Activated CD4-positive, alpha-beta T cell treated with anti-CD3 and anti-CD28 coated beads for 36 hours (primary cell): ENCODE measurements at regions of chr2 and their contacts with region 1.

Region 1: DNA sequence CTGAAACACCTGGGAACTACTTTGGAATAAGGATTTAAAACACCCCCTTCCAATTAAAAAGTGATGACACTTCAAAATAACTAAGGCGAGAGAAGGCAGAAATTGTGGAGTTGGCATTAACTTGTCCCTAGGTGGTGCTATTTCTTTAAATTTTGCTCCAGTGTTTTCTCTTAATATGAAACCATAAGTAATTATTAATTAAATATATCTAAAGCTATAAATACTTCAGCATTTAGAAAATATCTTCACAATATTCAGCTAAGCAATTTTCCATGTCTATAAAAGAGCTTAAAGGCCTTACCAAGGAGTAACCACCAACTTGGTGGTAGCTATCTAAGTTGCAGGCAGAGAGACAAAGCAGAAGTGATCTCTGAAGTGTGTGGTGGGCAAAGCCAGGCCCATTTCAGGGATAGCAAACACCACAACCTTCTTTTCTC is 186.8 kb upstream of the PGAP1 start:
- DNase-seq: no peak
- ATAC-seq: peak; percentile 41
- H3K4me3 Mint-ChIP-seq: no peak overlapping the region
- H3K27ac Mint-ChIP-seq: peak overlapping the region; percentile 26
- H3K4me1 Mint-ChIP-seq: peaks cover 25% of the 10 kb centered on the region
- H3K27me3 Mint-ChIP-seq: no peaks in the 10 kb centered on the region

Region 2: DNA sequence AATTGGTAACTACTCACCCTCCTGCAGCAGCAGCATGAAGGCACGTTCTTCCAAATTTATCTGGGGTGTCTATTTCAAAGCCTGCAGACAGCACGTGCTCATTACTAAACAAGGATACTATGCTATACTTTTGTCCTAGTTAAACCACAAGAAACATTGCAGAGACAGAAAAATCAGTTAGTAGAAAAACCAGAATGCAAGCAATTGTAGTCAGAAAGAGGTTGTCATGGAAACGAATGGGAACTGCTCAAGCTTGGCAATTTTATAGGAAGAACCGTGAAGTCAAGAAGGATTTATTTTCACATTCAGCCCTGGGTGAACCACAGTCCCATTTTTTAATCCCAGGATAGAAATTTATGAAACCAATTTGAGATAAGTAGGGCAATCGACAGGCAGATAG is 24.6 kb before region 1 on chr2:
- CTCF ChIA-PET with region 1: interaction called, 31 read pairs
- POLR2A ChIA-PET with region 1: no interaction called
- intact Hi-C with region 1: no loop called
- DNase-seq: no peak
- ATAC-seq: no peak
- H3K4me3 Mint-ChIP-seq: no peak overlapping the region
- H3K27ac Mint-ChIP-seq: peak overlapping the region; percentile 20
- H3K4me1 Mint-ChIP-seq: peaks cover 8% of the 10 kb centered on the region
- H3K27me3 Mint-ChIP-seq: no peaks in the 10 kb centered on the region

Region 3: DNA sequence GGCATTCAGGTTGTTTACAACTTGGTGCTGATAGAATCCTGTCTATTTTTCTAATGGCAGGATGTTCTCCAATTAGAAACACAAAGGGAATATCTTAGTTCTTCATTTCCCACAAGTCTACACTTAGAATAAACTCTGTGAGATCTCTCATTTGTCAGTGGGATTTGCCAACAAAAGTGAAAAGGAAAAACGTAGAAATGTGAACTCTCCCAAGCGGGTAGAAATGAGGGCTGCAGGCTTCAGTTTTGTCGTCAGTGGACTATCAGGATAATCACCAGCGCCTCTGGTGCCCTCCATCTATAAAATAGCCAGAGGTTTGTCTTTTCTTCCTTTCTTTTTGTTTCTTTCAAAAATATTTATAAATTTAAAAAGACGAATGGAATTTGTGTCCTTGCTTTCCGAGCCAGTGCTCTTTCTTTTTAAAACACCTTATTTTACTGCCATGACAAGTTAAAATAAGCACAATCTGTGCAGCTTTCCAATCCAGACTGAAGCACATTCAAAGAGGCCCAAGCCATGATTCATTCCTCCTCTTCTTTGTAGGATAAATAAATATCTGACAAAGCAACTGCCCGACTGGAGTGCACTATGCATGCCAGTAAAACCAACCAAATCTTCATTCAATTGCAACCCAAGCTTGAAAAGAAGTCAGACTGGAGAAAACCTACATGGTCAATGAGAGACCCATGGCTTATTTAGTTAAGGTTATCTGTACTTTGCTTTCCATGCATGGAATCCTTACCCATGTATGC is 11.5 kb after region 1 on chr2:
- CTCF ChIA-PET with region 1: interaction called, 31 read pairs
- POLR2A ChIA-PET with region 1: interaction called, 6 read pairs
- intact Hi-C with region 1: no loop called
- DNase-seq: no peak
- ATAC-seq: no peak
- H3K4me3 Mint-ChIP-seq: no peak overlapping the region
- H3K27ac Mint-ChIP-seq: no peak overlapping the region
- H3K4me1 Mint-ChIP-seq: peaks cover 53% of the 10 kb centered on the region
- H3K27me3 Mint-ChIP-seq: no peaks in the 10 kb centered on the region

Region 4: GRCh38 chr2:197145471-197146138 is 32.3 kb after region 1 on chr2:
- CTCF ChIA-PET with region 1: interaction called, 15 read pairs
- POLR2A ChIA-PET with region 1: no interaction called
- intact Hi-C with region 1: no loop called
- DNase-seq: no peak
- ATAC-seq: peak; percentile 81
- H3K4me3 Mint-ChIP-seq: no peak overlapping the region
- H3K27ac Mint-ChIP-seq: peak overlapping the region; percentile 88
- H3K4me1 Mint-ChIP-seq: peaks cover 75% of the 10 kb centered on the region
- H3K27me3 Mint-ChIP-seq: no peaks in the 10 kb centered on the region

Region 5: DNA sequence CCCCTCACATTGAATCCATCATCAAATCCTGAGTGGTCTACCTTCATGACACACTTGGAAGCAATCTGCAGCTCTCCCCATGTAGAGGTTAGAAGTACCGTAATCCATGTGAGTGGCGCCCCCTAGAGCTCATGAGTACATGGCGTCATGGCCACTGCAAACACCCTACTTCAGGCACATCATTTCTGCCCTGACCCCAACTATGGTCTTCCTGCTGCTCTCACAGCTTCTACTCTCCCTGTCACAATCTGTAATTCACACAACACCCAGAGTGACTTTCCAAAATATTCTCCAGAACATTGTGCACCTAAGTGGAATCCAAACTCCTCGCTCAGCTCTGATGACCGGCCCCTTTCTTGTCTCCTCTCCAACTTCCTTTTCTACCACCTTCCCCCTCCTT is 55.4 kb after region 1 on chr2:
- CTCF ChIA-PET with region 1: interaction called, 86 read pairs
- POLR2A ChIA-PET with region 1: interaction called, 4 read pairs
- intact Hi-C with region 1: loop called (anchors 1 kb)
- DNase-seq: peak; percentile 87
- ATAC-seq: peak; percentile 83
- H3K4me3 Mint-ChIP-seq: no peak overlapping the region
- H3K27ac Mint-ChIP-seq: peak overlapping the region; percentile 82
- H3K4me1 Mint-ChIP-seq: peaks cover 69% of the 10 kb centered on the region
- H3K27me3 Mint-ChIP-seq: no peaks in the 10 kb centered on the region

Region 6: GRCh38 chr2:197191177-197191939 is 78.1 kb after region 1 on chr2:
- CTCF ChIA-PET with region 1: interaction called, 29 read pairs
- POLR2A ChIA-PET with region 1: no interaction called
- intact Hi-C with region 1: loop called in 1 of 2 experiments (anchors 1 kb)
- DNase-seq: no peak
- ATAC-seq: peak; percentile 54
- H3K4me3 Mint-ChIP-seq: peak overlapping the region; percentile 33
- H3K27ac Mint-ChIP-seq: peak overlapping the region; percentile 59
- H3K4me1 Mint-ChIP-seq: peaks cover 79% of the 10 kb centered on the region
- H3K27me3 Mint-ChIP-seq: no peaks in the 10 kb centered on the region

Region 7: DNA sequence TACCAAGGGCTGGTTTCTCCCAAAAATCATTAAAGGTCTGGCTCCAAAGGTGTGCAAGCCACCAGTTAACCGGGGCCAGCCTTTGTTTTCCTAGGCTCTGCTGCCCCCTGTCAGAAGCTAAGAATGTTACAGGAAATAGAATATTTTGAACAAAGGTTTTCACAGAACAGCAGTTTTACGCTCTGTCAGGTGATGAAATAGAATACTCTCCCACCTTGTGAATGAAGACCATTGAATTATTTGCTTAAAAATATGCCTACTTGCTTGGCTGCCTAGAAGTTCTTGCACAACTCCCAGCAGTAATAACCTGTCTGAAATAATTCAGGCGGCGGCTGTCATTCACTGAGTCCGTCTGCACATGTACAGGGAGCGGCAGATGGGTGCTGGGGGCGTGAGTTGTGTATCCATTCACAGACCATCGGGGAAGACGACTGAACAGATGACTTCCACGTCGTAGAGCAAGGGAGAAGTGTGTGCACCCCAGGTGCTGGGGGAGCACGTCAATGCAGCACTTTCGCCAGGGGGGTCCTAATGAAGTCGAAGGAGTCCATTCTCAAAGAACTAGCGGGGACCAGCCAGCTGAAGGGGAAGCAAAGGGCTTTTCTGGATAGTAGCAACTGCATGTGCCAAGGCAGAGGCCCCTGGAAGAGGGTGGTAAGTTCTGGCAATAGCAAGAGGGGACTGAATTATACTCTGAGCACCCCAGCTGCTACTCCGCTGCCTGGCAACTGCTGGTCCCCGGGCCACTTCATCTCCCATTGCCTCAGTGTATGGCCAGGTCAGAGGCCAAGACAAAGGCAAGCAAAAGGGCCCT is 265.4 kb after region 1 on chr2:
- CTCF ChIA-PET with region 1: interaction called, 29 read pairs
- POLR2A ChIA-PET with region 1: no interaction called
- intact Hi-C with region 1: loop called (anchors 1 kb)
- DNase-seq: peak; percentile 80
- ATAC-seq: peak; percentile 83
- H3K4me3 Mint-ChIP-seq: no peak overlapping the region
- H3K27ac Mint-ChIP-seq: no peak overlapping the region
- H3K4me1 Mint-ChIP-seq: peaks cover 19% of the 10 kb centered on the region
- H3K27me3 Mint-ChIP-seq: no peaks in the 10 kb centered on the region